ENCODE measurements at regions of chr2 and their contacts with region 1.

Region 1: GRCh38 chr2:135531231-135532228 is at the start of gene R3HDM1:
- DNase-seq: peak; percentile 97
- ATAC-seq: peak; percentile 97
- total RNA-seq, gene R3HDM1: 12.5 TPM

Region 2: DNA sequence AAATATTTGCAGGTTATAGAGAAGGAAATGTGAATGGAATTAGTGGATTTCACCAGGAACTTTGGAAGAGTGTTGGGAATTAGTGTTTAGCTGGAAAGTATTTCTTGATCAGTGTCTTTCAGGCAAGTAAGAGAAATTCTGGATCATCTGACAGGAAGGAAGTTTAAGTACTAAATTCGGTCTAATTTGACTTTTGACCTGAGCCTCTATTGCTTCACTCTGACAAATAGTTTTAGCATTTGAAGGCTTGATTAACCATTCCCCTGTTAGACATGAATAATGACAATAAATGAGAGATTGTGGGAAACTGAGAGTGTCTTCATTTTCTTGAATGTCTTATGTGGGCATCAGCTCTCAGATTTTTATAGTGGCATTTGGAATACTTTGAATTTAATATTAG is 596.9 kb before region 1 on chr2:
- intact Hi-C with region 1: loop called (anchors 10 kb)
- DNase-seq: no peak
- ATAC-seq: no peak

Region 3: GRCh38 chr2:135741395-135742324 is 210.1 kb after region 1 on chr2 and contains the start of gene UBXN4:
- intact Hi-C with region 1: loop called (anchors 2 kb)
- DNase-seq: peak; percentile 98
- ATAC-seq: peak; percentile 99
- total RNA-seq, gene UBXN4: 54.9 TPM

Measured in Right ventricle myocardium inferior (tissue), 1 donor.